ENCODE measurements at regions of chr7 and their contacts with region 1.

Region 1: GRCh38 chr7:158856883-158857668 is 718 bp downstream of the DYNC2I1 start:
- DNase-seq: no peak
- H3K4me3 ChIP-seq: peak overlapping the region; percentile 80
- H3K27ac ChIP-seq: peak overlapping the region; percentile 9
- H3K4me1 ChIP-seq: peaks cover 21% of the 10 kb centered on the region
- CTCF ChIP-seq: no peak

Region 2: DNA sequence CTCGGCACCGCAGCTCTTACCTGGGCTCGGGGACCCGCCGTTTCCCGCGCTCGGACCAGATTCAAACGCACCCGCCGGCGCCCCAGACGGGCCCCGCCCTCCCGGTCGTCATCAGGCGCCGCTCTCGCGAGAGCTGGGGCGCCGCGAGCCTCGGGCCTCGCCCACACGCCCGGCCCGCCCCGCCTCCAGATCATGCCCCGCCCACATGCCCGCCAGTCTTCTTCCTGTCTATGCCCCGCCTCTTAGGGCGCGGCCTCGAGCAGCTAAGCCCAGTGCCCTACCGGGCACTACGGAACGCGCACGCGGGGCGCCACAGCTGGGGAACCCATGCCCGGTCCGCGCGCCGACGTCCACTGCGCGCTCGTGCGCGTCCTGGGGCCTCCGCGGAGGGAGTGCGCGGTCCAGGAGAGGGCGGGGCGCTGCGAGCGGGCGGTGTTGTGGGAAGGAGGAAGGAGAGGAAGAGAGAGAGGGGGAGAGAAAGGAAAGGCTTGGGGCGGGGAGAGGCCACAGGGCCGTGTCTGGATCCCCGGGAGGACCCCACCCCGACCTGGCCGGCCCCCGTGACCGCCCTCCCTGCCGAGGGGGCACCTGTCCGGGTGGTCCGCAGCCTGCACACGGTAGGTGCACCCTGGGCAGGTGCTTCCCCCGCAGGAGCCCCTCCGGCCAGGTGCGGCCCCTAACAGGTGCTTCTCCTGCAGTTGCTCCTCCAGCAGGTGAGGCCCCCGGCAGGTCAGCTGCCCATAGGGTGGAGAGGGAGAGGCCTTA is 152.2 kb before region 1 on chr7 and contains the start of gene NCAPG2:
- CTCF ChIA-PET with region 1: no interaction called
- POLR2A ChIA-PET with region 1: interaction called, 3 read pairs
- intact Hi-C with region 1: loop called (anchors 1 kb)
- DNase-seq: peak; percentile 97
- H3K4me3 ChIP-seq: peak within 1 kb of the TSS; percentile 77
- H3K27ac ChIP-seq: peak within 1 kb of the TSS; percentile 48
- H3K4me1 ChIP-seq: peaks cover 19% of the 10 kb centered on the region
- CTCF ChIP-seq: no peak
- total RNA-seq, gene NCAPG2: 61.8 and 67.9 TPM in 2 replicates

Region 3: DNA sequence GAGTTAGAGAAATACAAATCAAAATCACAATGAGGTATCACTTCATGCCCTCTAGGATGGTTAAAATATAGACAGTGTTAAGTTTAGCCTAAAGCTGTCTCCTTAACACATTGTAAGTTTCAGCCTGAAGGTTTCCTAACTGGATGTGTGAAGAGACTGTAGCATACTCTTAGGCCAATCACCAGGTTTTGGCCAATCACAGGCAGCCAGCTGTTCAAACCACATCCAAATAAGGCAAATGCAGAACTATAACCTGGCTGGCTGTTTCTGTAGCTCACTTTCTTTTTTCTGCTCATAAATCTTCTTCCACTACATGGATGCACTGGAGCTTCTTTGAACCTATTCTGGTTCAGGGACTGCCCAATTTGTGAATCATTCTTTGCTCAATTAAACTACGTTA is 47.5 kb before region 1 on chr7:
- CTCF ChIA-PET with region 1: no interaction called
- POLR2A ChIA-PET with region 1: no interaction called
- intact Hi-C with region 1: no loop called
- DNase-seq: no peak
- H3K4me3 ChIP-seq: no peak overlapping the region
- H3K27ac ChIP-seq: no peak overlapping the region
- H3K4me1 ChIP-seq: peaks cover 16% of the 10 kb centered on the region
- CTCF ChIP-seq: no peak

Region 4: GRCh38 chr7:158829342-158830210 is 27.5 kb before region 1 on chr7 and contains the start of gene ESYT2:
- CTCF ChIA-PET with region 1: interaction called, 3 read pairs
- POLR2A ChIA-PET with region 1: no interaction called
- intact Hi-C with region 1: loop called (anchors 1 kb)
- DNase-seq: peak; percentile 96
- H3K4me3 ChIP-seq: peak within 1 kb of the TSS; percentile 87
- H3K27ac ChIP-seq: peak within 1 kb of the TSS; percentile 54
- H3K4me1 ChIP-seq: peaks cover 16% of the 10 kb centered on the region
- CTCF ChIP-seq: peak; percentile 43
- total RNA-seq, gene ESYT2: 30.5 and 33.7 TPM in 2 replicates

Region 5: DNA sequence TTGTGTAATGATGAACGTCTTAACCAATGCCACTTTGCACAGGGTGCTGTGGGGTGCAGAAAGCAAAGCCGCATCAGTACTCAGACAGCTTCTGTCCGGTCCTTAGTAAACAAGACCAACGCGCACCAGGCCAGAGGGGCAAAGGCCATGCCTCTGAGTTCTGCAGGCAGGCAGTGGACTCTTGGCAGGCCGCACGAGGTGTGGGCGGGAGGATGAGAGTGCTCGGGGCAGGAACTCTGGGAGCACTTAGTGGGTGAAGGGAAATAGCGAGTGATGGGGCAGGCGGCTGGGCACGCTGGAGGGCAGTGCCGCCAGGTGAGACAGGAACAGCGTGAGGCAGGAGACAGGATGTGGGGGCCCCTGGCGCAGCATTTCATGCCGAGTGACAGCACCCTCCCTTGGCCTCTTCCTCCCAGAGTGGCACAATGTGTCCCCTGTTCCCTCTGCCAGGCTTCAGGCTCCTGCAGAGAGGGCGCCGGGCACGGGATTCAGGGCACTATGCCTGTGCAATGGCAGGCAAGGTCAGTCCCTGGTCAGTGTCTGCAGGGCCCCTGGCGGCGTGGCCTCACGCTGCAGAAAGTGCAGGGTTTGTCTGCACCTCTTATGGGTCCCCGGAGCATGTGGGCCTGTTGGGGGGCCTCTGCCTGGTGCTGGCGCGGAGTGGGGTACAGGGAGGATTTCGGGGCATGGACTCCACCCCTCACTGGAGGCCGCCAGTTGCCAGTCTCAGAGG is 227.2 kb after region 1 on chr7:
- CTCF ChIA-PET with region 1: no interaction called
- POLR2A ChIA-PET with region 1: no interaction called
- intact Hi-C with region 1: no loop called
- DNase-seq: no peak
- H3K4me3 ChIP-seq: no peak overlapping the region
- H3K27ac ChIP-seq: no peak overlapping the region
- H3K4me1 ChIP-seq: no peaks in the 10 kb centered on the region
- CTCF ChIP-seq: no peak

Measured in OCI-LY7 (cell line).